H1 (cell line): ENCODE measurements at regions of chr1 and their contacts with region 1.

Region 1: DNA sequence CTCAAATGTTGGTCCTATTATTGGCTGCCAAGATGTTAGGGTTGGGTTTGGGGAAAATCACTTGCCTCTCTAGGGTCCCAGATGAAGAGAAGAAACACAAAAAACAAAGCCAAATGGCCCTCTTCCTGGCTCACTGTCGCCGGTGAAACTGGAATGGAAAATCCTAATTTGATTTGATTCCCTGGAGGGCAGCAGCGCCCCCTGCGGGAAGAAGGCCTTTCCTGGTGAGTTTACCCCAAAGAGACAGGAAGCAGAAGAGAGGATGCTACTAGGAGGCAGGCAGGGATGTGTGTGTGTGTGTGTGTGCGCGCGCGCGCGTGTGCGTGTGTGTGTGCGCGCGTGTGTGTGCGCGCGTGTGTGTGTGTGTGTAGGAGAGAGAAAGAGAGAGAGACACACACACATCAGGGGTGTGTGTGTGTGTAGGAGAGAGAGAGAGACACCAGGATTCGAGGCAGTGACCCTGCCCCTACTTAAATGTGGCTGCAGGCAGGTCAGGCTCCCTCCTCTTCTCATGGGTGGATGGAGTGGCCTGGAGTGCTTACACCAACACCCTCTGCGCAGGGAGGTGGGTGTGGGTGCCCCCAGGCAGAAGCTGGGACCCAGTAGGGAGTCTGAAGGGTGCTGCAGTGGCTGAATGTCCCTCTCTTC is 3.1 kb upstream of the SELENON start:
- DNase-seq: peak; percentile 65 to 98
- H3K4me3 ChIP-seq: no peak overlapping the region
- H3K27ac ChIP-seq: no peak overlapping the region
- H3K4me1 ChIP-seq: peaks cover 4 to 14% (median 11%) of the 10 kb centered on the region in 4 experiments; a peak in 6 of 7 replicates
- H3K27me3 ChIP-seq: peaks cover 0 to 2% (median under 1%) of the 10 kb centered on the region in 4 experiments; a peak in 3 of 7 replicates
- CTCF ChIP-seq: peak; percentile 86 to 89 (median 87)
- EP300 ChIP-seq: no peak
- POLR2A ChIP-seq: no peak
- RAD21 ChIP-seq: peak; percentile 87 to 92

Region 2: GRCh38 chr1:25608488-25609178 is 188.3 kb before region 1 on chr1:
- CTCF ChIA-PET with region 1: interaction called, 20 read pairs
- POLR2A ChIA-PET with region 1: interaction called, 3 read pairs
- DNase-seq: peak in 1 of 2 experiments; percentile 87
- H3K4me3 ChIP-seq: no peak overlapping the region
- H3K27ac ChIP-seq: no peak overlapping the region
- H3K4me1 ChIP-seq: no peaks in the 10 kb centered on the region
- H3K27me3 ChIP-seq: no peaks in the 10 kb centered on the region; a peak in 2 of 7 replicates
- CTCF ChIP-seq: peak; percentile 63 to 69 (median 65)
- EP300 ChIP-seq: no peak
- POLR2A ChIP-seq: no peak
- RAD21 ChIP-seq: peak; percentile 72 to 81

Region 3: GRCh38 chr1:25727635-25728330 is 69.2 kb before region 1 on chr1:
- CTCF ChIA-PET with region 1: interaction called, 10 read pairs
- POLR2A ChIA-PET with region 1: no interaction called
- DNase-seq: peak in 1 of 2 experiments; percentile 50
- H3K4me3 ChIP-seq: no peak overlapping the region
- H3K27ac ChIP-seq: no peak overlapping the region
- H3K4me1 ChIP-seq: peaks cover 9 to 25% (median 17%) of the 10 kb centered on the region in 4 experiments
- H3K27me3 ChIP-seq: no peaks in the 10 kb centered on the region
- CTCF ChIP-seq: no peak
- EP300 ChIP-seq: no peak
- POLR2A ChIP-seq: no peak
- RAD21 ChIP-seq: no peak

Region 4: DNA sequence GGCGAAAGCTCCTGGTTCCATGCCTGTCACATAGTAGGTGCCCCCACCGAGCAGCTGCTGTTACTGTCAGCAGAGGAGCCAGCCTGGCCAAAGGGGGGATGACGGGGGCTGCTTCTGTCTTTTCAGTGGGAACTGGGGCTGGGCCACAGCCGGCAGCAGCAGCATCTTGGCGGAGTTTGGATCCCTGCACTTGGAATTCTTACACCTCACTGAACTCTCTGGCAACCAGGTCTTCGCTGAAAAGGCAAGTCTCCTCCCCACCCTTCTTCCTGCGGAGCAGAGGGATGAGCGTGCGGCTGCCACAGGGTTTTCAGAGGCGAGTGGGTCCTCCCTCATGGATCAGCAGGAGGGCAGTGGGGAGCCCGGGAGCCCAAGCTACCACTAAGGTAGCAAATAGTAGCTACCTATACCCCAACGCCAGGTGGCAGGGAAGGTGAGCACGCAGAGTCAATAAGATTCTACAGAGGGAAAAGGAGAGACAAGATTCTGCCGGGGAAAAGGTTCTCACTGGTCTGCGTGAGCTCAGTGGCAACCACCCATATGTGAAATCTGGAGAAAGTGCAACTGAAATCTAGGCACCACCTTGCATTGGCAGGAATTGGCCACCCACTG is 38.4 kb before region 1 on chr1:
- CTCF ChIA-PET with region 1: interaction called, 16 read pairs
- POLR2A ChIA-PET with region 1: interaction called, 3 read pairs
- DNase-seq: no peak
- H3K4me3 ChIP-seq: no peak overlapping the region
- H3K27ac ChIP-seq: no peak overlapping the region
- H3K4me1 ChIP-seq: peaks cover 0 to 16% (median 7%) of the 10 kb centered on the region in 4 experiments; a peak in 5 of 7 replicates
- H3K27me3 ChIP-seq: no peaks in the 10 kb centered on the region
- CTCF ChIP-seq: peak in 1 of 3 experiments; percentile 24; a peak in 1 of 4 replicates
- EP300 ChIP-seq: no peak
- POLR2A ChIP-seq: no peak
- RAD21 ChIP-seq: no peak; a peak in 1 of 4 replicates

Region 5: GRCh38 chr1:25810341-25811299 is 13.7 kb after region 1 on chr1:
- CTCF ChIA-PET with region 1: interaction called, 83 read pairs
- POLR2A ChIA-PET with region 1: interaction called, 9 read pairs
- DNase-seq: peak; percentile 59 to 100
- H3K4me3 ChIP-seq: no peak overlapping the region
- H3K27ac ChIP-seq: no peak overlapping the region
- H3K4me1 ChIP-seq: peaks cover 0 to 5% (median under 1%) of the 10 kb centered on the region in 4 experiments; a peak in 2 of 7 replicates
- H3K27me3 ChIP-seq: no peaks in the 10 kb centered on the region
- CTCF ChIP-seq: peak; percentile 98 to 100 (median 99)
- EP300 ChIP-seq: no peak
- POLR2A ChIP-seq: no peak
- RAD21 ChIP-seq: peak; percentile 99 to 100